Left ventricle myocardium inferior (tissue), 1 donor: ENCODE measurements at regions of chr1 and their contacts with region 1.

Region 1: GRCh38 chr1:228664399-228664914 is 70.8 kb upstream of the RHOU start:
- DNase-seq: peak; percentile 67
- H3K4me3 ChIP-seq: no peak overlapping the region
- H3K27ac ChIP-seq: no peak overlapping the region
- H3K4me1 ChIP-seq: peaks cover 16% of the 10 kb centered on the region
- H3K27me3 ChIP-seq: no peaks in the 10 kb centered on the region
- CTCF ChIP-seq: peak; percentile 91

Region 2: DNA sequence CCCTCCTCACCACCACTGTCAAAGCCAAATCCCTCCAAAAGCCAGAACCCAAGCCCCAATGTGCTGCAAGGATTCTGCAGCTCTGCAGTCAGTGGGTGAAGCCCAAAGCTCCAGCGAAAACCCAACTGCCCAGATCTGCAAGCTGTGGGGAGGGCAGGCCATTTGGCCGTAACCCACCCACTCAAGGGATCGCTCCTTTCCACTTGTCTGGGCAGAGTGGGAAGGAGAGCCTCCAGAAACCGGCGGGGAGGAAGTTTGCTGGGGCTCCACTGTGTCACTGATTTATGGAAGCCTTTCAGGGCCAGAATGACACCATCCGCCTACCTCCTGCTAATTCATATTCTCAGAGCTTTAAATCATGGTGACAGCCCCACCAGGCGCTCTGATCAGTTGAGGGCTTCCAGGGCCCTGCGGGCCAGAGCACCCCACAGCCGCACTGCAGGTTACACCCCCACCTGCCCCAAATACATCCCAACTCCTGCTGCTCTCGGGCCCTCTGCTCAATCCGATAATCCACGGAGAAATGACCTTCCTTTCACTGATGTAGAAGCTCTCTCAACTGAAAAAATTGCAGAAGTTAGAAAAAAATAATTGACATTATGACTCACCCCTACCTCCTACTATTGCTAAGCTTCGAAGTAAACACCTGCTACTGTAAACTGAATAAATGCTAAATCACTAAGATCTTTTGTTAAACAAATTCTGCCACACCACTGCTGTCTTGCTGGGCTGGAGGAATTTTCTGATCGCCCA is 565.9 kb after region 1 on chr1:
- intact Hi-C with region 1: loop called (anchors 10 kb)
- DNase-seq: no peak
- H3K4me3 ChIP-seq: peak overlapping the region; percentile 21
- H3K27ac ChIP-seq: peak overlapping the region; percentile 96
- H3K4me1 ChIP-seq: peaks cover 43% of the 10 kb centered on the region
- H3K27me3 ChIP-seq: peaks cover 4% of the 10 kb centered on the region
- CTCF ChIP-seq: no peak